Heart right ventricle (tissue), 16 donors: ENCODE measurements at regions of chr1 and their contacts with region 1.

Region 1: GRCh38 chr1:194347200-194347599 is 1160.8 kb upstream of the B3GALT2 start:
- DNase-seq: no peak
- ATAC-seq: no peak
- H3K4me3 ChIP-seq: no peak overlapping the region
- H3K27ac ChIP-seq: no peak overlapping the region
- H3K4me1 ChIP-seq: no peaks in the 10 kb centered on the region
- H3K27me3 ChIP-seq: no peaks in the 10 kb centered on the region
- CTCF ChIP-seq: no peak

Region 2: GRCh38 chr1:193937311-193937710 is 409.9 kb before region 1 on chr1:
- intact Hi-C with region 1: no loop called
- DNase-seq: no peak
- ATAC-seq: no peak
- H3K4me3 ChIP-seq: no peak overlapping the region
- H3K27ac ChIP-seq: no peak overlapping the region
- H3K4me1 ChIP-seq: no peaks in the 10 kb centered on the region
- H3K27me3 ChIP-seq: no peaks in the 10 kb centered on the region
- CTCF ChIP-seq: no peak

Region 3: DNA sequence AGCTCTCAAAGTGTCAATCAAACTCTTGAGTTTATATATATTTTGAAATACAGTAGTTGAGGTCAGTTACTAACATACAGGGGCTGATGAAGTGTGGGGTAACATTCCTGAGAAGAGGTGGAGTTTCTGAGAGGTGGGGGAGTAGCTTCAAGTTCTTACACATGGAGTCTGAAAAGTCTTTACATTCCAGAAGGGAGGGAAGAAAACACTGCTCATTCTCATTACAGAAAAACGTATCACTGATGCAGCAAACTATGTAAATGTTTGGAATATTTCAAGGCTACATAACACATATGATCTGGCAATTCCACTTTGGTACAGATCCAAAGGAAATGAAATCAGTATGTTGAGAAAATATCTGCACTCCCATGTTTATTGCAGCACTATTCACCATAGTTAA is 95.0 kb before region 1 on chr1:
- intact Hi-C with region 1: no loop called
- DNase-seq: no peak
- ATAC-seq: no peak
- H3K4me3 ChIP-seq: no peak overlapping the region
- H3K27ac ChIP-seq: no peak overlapping the region
- H3K4me1 ChIP-seq: no peaks in the 10 kb centered on the region
- H3K27me3 ChIP-seq: no peaks in the 10 kb centered on the region
- CTCF ChIP-seq: no peak

Region 4: DNA sequence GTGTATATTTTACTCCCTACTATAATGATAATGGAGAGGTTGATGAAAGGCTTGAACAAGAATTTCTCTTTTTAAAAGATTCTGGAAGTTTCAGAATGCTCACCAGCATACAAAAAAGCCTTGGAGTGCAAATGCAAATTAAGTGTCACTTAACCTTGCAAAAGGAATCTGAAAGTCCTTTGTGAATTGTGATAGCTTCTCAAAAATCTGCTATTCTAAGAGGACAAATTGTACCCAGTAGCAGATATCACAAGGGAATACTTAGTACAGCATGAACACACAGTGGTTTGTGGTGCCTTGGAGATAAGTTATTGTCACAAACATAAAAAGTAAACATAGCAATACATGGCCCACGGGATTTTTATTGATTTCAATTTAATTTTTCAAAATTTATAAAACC is 47.5 kb after region 1 on chr1:
- intact Hi-C with region 1: loop called in 1 of 10 experiments (anchors 1 kb)
- DNase-seq: no peak
- ATAC-seq: no peak
- H3K4me3 ChIP-seq: no peak overlapping the region
- H3K27ac ChIP-seq: no peak overlapping the region
- H3K4me1 ChIP-seq: no peaks in the 10 kb centered on the region
- H3K27me3 ChIP-seq: no peaks in the 10 kb centered on the region
- CTCF ChIP-seq: no peak